Activated CD8-positive, alpha-beta T cell treated with anti-CD3 and anti-CD28 coated beads, Interleukin-2, amount 10 ng/mL, durations not matched to agents 7 days and 5 days (primary cell): ENCODE measurements at regions of chr3 and their contacts with region 1.

Region 1: DNA sequence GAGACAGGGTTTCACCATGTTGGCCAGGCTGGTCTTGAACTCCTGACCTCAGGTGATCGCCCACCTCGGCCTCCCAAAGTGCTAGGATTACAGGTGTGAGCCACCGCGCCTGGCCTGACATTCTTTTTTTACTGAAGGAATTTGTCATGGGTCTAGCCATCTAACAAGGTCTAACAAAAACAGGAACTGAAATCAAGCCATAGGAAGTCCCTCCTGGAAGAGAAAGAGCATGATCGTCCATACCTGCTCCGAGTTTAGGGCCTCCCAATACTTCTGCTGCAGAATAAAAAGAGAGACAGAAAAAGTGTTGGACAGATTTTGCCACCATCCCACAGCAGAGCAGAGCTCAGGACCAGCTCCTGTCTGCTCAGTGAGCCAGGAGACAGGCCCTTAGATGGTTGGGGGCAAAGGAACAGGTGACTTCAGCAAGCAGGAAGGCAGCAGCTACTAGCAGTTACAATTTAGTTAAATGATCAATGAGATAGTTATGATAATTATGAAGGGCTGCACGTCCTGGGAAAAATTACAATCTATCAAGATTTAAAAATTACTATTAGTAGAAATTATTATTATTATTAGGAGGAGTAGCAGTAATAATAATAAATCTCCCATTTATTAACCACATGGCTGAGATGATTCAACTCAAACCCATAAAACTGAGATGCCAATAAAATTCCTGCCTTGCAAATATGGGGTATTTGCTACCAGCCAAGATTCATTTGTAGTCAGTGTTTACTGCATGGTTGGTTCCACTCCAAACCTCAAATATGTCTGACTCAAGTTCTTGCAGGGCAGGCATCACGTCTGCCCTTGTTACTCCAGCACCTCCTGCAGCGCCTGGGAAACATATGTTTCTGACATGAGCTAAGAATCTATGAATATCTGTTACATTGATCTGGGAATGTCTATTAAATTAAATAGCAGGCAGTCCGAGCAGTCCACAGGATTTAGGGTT is 40.1 kb downstream of the TMEM44 start:
- DNase-seq: no peak
- ATAC-seq: no peak
- H3K4me3 Mint-ChIP-seq: no peak overlapping the region
- H3K27ac Mint-ChIP-seq: no peak overlapping the region
- H3K4me1 Mint-ChIP-seq: peaks cover 5% of the 10 kb centered on the region
- H3K27me3 Mint-ChIP-seq: no peaks in the 10 kb centered on the region

Region 2: DNA sequence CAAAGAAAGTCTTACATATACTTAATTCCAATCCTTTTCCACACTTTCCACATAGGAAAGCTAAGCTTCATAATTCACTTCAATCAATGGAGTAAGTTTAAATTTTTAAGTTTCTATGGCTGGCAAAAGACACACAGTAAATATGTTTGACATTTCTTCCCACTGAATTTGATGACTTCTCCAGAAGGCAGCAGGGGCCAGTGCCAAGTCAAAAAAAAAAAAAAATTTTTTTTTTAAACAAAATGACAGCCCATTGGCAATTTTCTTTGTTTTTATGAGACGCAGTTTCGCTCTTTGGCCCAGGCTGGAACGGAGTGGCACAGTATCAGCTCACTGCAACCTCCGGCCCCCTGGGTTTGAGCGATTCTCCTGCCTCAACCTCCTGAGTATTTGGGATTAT is 134.9 kb before region 1 on chr3:
- CTCF ChIA-PET with region 1: interaction called, 11 read pairs
- POLR2A ChIA-PET with region 1: no interaction called
- DNase-seq: no peak
- ATAC-seq: no peak
- H3K4me3 Mint-ChIP-seq: no peak overlapping the region
- H3K27ac Mint-ChIP-seq: no peak overlapping the region
- H3K4me1 Mint-ChIP-seq: no peaks in the 10 kb centered on the region
- H3K27me3 Mint-ChIP-seq: no peaks in the 10 kb centered on the region

Region 3: DNA sequence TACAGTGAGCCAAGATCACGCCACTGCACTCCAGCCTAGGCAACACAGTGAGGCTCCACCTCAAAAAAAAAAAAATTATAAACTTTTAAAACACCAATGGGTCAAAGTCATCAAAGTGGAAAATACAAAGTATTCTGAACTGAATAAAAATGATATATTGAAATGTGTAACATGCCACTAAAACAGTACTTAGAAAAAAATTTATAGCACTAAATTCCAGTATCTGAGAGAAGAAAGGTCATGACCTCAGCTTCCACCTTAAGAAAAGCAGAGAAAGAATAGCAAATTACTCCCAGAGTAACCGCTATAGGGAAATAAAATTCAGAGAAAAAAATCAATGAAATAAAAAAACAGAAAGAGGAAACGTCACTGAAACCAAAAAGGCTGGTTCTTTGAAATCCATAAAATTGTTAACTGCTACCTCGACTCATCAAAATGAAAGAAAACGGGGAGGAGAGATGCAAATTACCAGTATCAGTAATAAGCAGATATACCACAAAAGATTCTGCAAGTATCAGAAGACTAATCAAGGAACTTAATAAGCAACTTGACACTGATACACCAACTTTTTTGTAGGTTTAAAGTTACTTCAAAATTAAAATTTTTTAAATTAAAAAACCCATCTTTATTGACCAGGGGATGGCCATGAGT is 127.0 kb before region 1 on chr3:
- CTCF ChIA-PET with region 1: interaction called, 62 read pairs
- POLR2A ChIA-PET with region 1: no interaction called
- DNase-seq: no peak
- ATAC-seq: no peak
- H3K4me3 Mint-ChIP-seq: no peak overlapping the region
- H3K27ac Mint-ChIP-seq: no peak overlapping the region
- H3K4me1 Mint-ChIP-seq: peaks cover 8% of the 10 kb centered on the region
- H3K27me3 Mint-ChIP-seq: no peaks in the 10 kb centered on the region

Region 4: DNA sequence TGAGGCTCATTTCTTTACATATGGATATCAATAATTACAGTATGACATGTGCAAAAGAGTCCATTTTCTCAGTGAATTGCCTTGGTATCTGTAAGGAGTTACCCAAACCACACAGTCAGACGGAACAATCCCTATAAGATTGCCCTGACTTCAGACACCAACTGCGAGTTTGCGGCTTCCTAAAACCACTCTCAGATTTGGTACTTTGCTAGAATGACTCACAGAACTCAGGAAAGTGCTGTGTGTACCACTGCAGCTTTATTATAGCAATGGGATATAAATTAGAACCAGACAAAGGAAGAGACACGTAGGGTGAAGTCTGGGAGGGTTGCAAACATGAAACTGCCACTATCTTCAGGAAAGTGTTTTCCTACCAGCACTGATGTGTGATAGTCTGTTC is 60.5 kb before region 1 on chr3:
- CTCF ChIA-PET with region 1: no interaction called
- POLR2A ChIA-PET with region 1: no interaction called
- DNase-seq: no peak
- ATAC-seq: no peak
- H3K4me3 Mint-ChIP-seq: no peak overlapping the region
- H3K27ac Mint-ChIP-seq: no peak overlapping the region
- H3K4me1 Mint-ChIP-seq: peaks cover 1% of the 10 kb centered on the region
- H3K27me3 Mint-ChIP-seq: peaks cover 2% of the 10 kb centered on the region